Uterus (tissue), 4 donors: ENCODE measurements at regions of chr9 and their contacts with region 1.

Region 1: DNA sequence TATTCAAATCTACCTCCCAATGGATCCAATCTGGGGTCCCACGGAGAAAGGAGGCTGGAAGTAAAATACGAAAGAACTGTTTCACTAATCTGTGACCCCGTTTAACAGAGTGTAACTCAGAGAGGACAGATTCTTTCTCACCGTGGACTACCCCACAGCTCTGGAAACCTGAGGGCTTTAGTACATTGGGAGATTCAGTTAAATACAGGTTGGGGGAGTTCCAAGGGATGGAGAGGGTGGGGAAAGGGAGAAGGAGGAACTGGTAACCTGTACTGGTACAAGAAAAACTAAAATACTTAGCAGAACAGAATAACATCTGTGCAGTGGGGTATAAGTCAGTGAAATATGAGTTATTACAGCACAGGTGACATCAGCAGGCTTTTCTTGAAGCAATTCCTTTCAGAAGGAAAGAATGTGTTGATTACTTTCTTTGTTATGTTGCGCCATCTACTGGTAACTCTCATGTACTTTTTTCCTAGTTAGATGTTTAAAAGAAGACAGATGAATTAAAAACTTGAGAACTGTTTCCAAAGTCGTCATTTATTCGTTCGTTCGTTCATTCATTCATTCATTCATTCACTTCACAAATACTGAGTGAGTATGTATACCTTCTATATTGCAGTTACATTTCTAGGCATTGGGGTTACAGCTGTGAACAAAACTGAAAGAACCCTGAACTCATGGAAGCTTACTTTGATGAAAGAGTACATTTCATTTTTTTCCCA is 30.0 kb upstream of the STOM start:
- DNase-seq: no peak
- H3K4me3 ChIP-seq: no peak overlapping the region
- H3K27ac ChIP-seq: no peak overlapping the region
- H3K4me1 ChIP-seq: no peaks in the 10 kb centered on the region
- H3K27me3 ChIP-seq: no peaks in the 10 kb centered on the region
- CTCF ChIP-seq: peak; percentile 61 to 83 (median 72)
- POLR2A ChIP-seq: no peak

Region 2: GRCh38 chr9:121213136-121213806 is 186.8 kb before region 1 on chr9:
- intact Hi-C with region 1: loop called (anchors 5 kb)
- DNase-seq: peak; percentile 92 to 93
- H3K4me3 ChIP-seq: no peak overlapping the region
- H3K27ac ChIP-seq: peak overlapping the region; percentile 50 to 52
- H3K4me1 ChIP-seq: no peaks in the 10 kb centered on the region
- H3K27me3 ChIP-seq: no peaks in the 10 kb centered on the region
- CTCF ChIP-seq: peak; percentile 94 to 97 (median 96)
- POLR2A ChIP-seq: peak in 1 of 2 donors; percentile 31

Region 3: GRCh38 chr9:121545875-121546423 is 145.9 kb after region 1 on chr9:
- intact Hi-C with region 1: no loop called
- DNase-seq: peak; percentile 95 to 96
- H3K4me3 ChIP-seq: no peak overlapping the region
- H3K27ac ChIP-seq: peak overlapping the region in 1 of 2 donors; percentile 23
- H3K4me1 ChIP-seq: peaks cover 0 to 9% of the 10 kb centered on the region in 2 donors
- H3K27me3 ChIP-seq: no peaks in the 10 kb centered on the region
- CTCF ChIP-seq: peak; percentile 93 to 98 (median 96)
- POLR2A ChIP-seq: no peak